PC-9 (cell line): ENCODE measurements at regions of chr2 and their contacts with region 1.

Region 1: GRCh38 chr2:67463810-67464209 is 66.7 kb downstream of the ETAA1 start:
- DNase-seq: peak; percentile 70 to 98
- H3K4me3 ChIP-seq: no peak overlapping the region
- H3K27ac ChIP-seq: peak overlapping the region; percentile 56
- H3K4me1 ChIP-seq: peaks cover 26% of the 10 kb centered on the region
- H3K27me3 ChIP-seq: no peaks in the 10 kb centered on the region
- CTCF ChIP-seq: no peak

Region 2: DNA sequence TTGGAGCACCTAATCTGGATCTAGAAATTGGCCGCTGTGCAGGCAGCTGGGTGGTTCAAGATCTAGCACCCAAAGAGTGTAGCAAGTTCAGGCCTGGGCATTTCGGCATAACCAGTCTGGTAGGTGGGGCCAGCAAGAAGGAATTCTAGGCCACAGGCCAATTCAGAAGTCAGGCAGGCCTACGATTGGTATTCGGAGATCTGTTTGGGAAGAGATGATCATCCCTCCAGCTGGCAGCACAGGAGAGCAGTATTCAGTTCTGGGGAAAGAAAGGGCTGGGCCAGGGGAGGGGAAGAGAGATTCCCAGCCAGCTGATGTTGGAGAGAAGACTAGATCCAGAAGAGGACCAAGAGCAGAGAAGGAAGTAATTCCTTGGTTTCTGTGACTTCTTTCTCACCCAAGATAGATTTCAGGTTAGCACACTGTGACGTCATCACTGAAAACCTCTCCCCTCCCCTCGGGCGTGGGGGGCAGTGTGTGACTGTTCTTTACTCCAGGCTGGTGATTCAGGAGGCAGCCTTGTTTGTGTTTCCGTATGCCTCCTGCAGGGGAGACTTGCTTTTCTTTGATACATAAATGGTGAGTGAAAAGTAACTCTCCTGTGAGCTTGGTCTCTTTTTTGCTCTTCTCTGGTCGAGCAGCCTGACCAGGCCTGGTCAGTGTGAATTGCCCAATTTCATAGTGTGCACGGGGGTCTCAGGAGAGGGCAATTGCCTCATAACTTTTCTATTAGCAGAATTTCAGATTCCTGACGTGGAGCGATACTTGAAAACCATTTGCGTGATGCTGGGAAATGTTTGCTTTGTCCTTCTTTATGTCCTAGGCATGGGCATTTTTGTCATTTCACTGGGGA is 967.8 kb before region 1 on chr2:
- CTCF ChIA-PET with region 1: no interaction called
- POLR2A ChIA-PET with region 1: no interaction called
- intact Hi-C with region 1: loop called (anchors 10 kb)
- DNase-seq: peak; percentile 89 to 92
- H3K4me3 ChIP-seq: peak overlapping the region; percentile 32; the same call in 1 of the 2 replicates
- H3K27ac ChIP-seq: peak overlapping the region; percentile 91
- H3K4me1 ChIP-seq: peaks cover 46% of the 10 kb centered on the region
- H3K27me3 ChIP-seq: no peaks in the 10 kb centered on the region
- CTCF ChIP-seq: peak; percentile 55; the same call in 1 of the 2 replicates

Region 3: DNA sequence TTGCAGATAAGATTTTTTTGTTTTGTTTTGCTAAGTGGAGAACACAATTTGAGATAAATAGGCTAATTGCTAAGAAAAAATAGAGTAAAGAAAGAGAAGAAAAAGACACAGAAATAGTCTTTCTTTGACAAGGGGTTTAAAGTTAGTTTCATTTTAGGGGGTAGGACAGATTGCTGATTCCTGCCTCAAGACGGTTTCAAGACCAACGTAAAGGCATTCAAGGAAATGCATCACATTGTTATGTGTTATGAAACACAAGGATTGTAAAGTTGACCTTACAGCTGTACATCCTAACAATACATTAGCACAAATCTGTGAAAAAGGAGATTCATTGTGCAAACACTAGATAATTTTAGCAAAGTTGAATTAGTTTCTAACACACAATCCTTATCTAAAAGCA is 89.3 kb before region 1 on chr2:
- CTCF ChIA-PET with region 1: no interaction called
- POLR2A ChIA-PET with region 1: no interaction called
- intact Hi-C with region 1: no loop called
- DNase-seq: no peak
- H3K4me3 ChIP-seq: no peak overlapping the region
- H3K27ac ChIP-seq: no peak overlapping the region
- H3K4me1 ChIP-seq: no peaks in the 10 kb centered on the region
- H3K27me3 ChIP-seq: no peaks in the 10 kb centered on the region
- CTCF ChIP-seq: no peak

Region 4: DNA sequence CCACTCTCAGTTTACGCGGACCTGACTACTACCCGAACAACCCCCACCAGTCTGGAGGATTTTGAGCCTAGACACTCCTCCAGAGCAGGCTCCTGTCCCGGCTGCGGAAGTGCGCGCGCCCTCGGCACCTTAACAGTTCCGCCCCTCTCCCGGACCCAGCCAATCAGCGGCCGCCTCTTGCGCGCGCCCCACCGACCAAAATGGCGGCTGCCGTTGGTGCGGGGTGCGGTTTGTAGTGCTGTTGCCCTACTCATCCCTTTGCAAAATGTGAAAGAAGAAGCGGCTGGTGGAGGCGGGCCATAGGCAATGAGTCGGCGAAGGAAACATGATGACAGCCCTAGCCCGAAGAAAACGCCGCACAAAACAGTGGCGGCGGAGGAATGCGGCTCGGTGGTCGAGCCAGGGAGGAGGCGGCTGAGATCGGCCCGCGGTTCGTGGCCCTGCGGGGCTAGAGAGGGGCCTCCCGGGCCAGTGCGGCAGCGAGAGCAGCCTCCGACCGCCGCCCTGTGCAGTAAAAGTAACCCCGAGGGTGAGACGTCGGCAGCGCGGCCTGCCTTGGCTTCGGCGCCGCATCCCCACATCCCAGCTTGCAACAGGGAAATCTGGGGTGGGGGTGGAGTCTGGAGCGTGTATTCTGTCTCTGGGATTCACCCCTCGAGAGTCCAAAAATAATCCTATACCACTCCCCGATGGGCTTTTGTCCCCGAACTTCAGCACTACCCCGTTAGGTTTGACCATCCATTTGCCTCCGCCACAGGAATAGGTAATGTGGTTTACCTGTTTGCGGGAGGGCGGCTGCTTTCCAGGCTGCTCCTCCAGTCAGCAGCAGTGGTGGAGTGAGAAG is 66.4 kb before region 1 on chr2 and contains the start of gene ETAA1:
- CTCF ChIA-PET with region 1: no interaction called
- POLR2A ChIA-PET with region 1: no interaction called
- intact Hi-C with region 1: loop called (anchors 2 kb)
- DNase-seq: peak; percentile 75 to 90
- H3K4me3 ChIP-seq: peak within 1 kb of the TSS; percentile 78
- H3K27ac ChIP-seq: peak within 1 kb of the TSS; percentile 57
- H3K4me1 ChIP-seq: peaks cover 34% of the 10 kb centered on the region
- H3K27me3 ChIP-seq: no peaks in the 10 kb centered on the region
- CTCF ChIP-seq: no peak
- total RNA-seq, gene ETAA1: 17.1 and 25.3 TPM in 2 replicates

Region 5: GRCh38 chr2:67437174-67437573 is 26.6 kb before region 1 on chr2:
- CTCF ChIA-PET with region 1: no interaction called
- POLR2A ChIA-PET with region 1: no interaction called
- intact Hi-C with region 1: loop called (anchors 2 kb)
- DNase-seq: peak in 1 of 2 experiments; percentile 91
- H3K4me3 ChIP-seq: no peak overlapping the region
- H3K27ac ChIP-seq: no peak overlapping the region
- H3K4me1 ChIP-seq: peaks cover 16% of the 10 kb centered on the region
- H3K27me3 ChIP-seq: no peaks in the 10 kb centered on the region
- CTCF ChIP-seq: no peak

Region 6: DNA sequence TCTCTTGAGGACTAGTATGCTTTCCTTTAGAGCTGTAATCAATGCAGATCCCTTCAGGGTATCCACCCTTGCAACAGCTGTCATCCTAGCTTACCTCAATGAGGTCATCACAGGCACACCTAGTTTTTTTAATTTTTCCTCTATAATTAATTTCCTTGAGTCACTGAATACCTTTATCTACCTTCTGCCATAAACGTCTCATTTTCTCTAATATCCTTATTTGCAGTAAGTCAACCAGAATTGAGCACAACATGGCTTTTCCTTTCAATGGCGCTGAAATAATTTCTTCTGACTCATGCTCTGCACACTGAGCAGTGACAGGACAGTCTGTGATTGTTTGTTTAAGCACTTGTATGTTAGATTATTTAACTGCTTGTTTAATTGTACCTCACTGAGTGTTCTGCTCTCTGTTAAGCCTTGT is 17.3 kb before region 1 on chr2:
- CTCF ChIA-PET with region 1: no interaction called
- POLR2A ChIA-PET with region 1: no interaction called
- intact Hi-C with region 1: loop called (anchors 2 kb)
- DNase-seq: peak; percentile 24 to 94
- H3K4me3 ChIP-seq: no peak overlapping the region
- H3K27ac ChIP-seq: no peak overlapping the region
- H3K4me1 ChIP-seq: peaks cover 23% of the 10 kb centered on the region
- H3K27me3 ChIP-seq: no peaks in the 10 kb centered on the region
- CTCF ChIP-seq: no peak